HCT116 (cell line): ENCODE measurements at regions of chr2 and their contacts with region 1.

Region 1: GRCh38 chr2:30115141-30115980 is 31.4 kb upstream of the YPEL5 start:
- DNase-seq: peak; percentile 76
- ATAC-seq: peak; percentile 97
- H3K4me3 ChIP-seq: no peak overlapping the region
- H3K27ac ChIP-seq: no peak overlapping the region
- H3K4me1 ChIP-seq: peaks cover 0 to 10% of the 10 kb centered on the region in 2 experiments; a peak in 3 of 4 replicates
- H3K27me3 ChIP-seq: no peaks in the 10 kb centered on the region
- CTCF ChIP-seq: peak; percentile 90 to 98 (median 97); a peak in 5 of 6 replicates
- POLR2A ChIP-seq: no peak
- RAD21 ChIP-seq: peak; percentile 92

Region 2: DNA sequence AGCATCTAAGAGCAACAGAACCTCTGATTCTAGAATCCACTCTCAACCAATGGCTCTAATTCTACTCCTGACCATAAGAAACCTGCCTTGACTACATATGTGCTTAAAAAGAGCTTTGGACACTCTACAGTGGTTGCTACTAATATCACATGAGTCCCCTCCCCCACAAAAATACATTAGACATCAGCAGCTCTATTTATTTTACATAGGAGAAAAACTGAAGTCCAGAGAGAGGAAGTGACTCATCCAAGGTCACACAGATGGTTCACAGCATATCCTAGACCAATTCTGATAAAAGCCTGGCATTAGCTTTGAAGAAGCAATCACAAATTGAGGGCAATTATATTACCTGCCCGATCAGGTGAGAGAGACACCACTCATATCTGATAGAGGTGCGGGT is 243.8 kb before region 1 on chr2:
- CTCF ChIA-PET with region 1: no interaction called
- POLR2A ChIA-PET with region 1: no interaction called
- RAD21 ChIA-PET with region 1: no interaction called
- intact Hi-C with region 1: no loop called
- DNase-seq: no peak
- ATAC-seq: no peak
- H3K4me3 ChIP-seq: no peak overlapping the region
- H3K27ac ChIP-seq: no peak overlapping the region
- H3K4me1 ChIP-seq: peaks cover 0 to 5% of the 10 kb centered on the region in 2 experiments; a peak in 1 of 4 replicates
- H3K27me3 ChIP-seq: peaks cover 30% of the 10 kb centered on the region
- CTCF ChIP-seq: no peak
- POLR2A ChIP-seq: no peak
- RAD21 ChIP-seq: no peak

Region 3: GRCh38 chr2:30095402-30095801 is 20.0 kb before region 1 on chr2:
- CTCF ChIA-PET with region 1: interaction called, 5 read pairs
- POLR2A ChIA-PET with region 1: no interaction called
- RAD21 ChIA-PET with region 1: no interaction called
- intact Hi-C with region 1: loop called (anchors 1 kb)
- DNase-seq: no peak
- ATAC-seq: no peak
- H3K4me3 ChIP-seq: no peak overlapping the region
- H3K27ac ChIP-seq: no peak overlapping the region
- H3K4me1 ChIP-seq: no peaks in the 10 kb centered on the region
- H3K27me3 ChIP-seq: peaks cover 42% of the 10 kb centered on the region
- CTCF ChIP-seq: no peak
- POLR2A ChIP-seq: no peak
- RAD21 ChIP-seq: no peak